Activated B cell treated with CpG ODN at 0.5 μM for 24 hours (primary cell): ENCODE measurements at regions of chr3 and their contacts with region 1.

Region 1: DNA sequence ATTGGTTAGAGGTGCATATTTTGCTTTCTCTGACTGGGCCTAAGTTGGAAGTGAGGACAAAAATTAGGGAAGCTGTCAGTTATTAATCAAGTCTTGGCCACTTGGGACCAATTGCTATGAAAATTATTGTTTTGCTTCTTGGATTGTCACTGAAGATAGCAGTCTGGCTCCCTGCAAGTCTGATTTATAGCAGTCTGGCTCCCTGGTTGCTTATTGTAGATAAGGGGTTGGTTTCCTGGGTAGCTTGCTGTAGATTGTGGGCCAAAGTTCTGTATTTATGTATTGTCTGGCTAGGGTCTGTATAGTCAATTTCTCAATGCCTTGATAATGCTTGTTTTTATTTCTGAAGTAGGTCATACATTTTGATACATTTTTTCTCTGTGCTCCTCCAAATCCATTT is 13.3 kb upstream of the DRD3 start:
- DNase-seq: no peak
- ATAC-seq: no peak
- H3K4me3 Mint-ChIP-seq: no peak overlapping the region
- H3K27ac Mint-ChIP-seq: no peak overlapping the region
- H3K4me1 Mint-ChIP-seq: no peaks in the 10 kb centered on the region
- H3K27me3 Mint-ChIP-seq: no peaks in the 10 kb centered on the region
- CTCF ChIP-seq: no peak

Region 2: GRCh38 chr3:114207768-114208167 is 15.6 kb after region 1 on chr3:
- CTCF ChIA-PET with region 1: interaction called, 3 read pairs
- POLR2A ChIA-PET with region 1: no interaction called
- intact Hi-C with region 1: loop called (anchors 1 kb)
- DNase-seq: no peak
- ATAC-seq: peak; percentile 97
- H3K4me3 Mint-ChIP-seq: peak overlapping the region; percentile 20
- H3K27ac Mint-ChIP-seq: peak overlapping the region; percentile 74
- H3K4me1 Mint-ChIP-seq: peaks cover 38% of the 10 kb centered on the region
- H3K27me3 Mint-ChIP-seq: no peaks in the 10 kb centered on the region
- CTCF ChIP-seq: no peak